ENCODE measurements at regions of chr17 and their contacts with region 1.

Region 1: GRCh38 chr17:68291844-68292695 is 775 bp downstream of the ARSG start:
- DNase-seq: peak; percentile 92
- H3K4me3 Mint-ChIP-seq: peak overlapping the region; percentile 81
- H3K27ac Mint-ChIP-seq: peak overlapping the region; percentile 84
- H3K4me1 Mint-ChIP-seq: peaks cover 60% of the 10 kb centered on the region
- H3K27me3 Mint-ChIP-seq: no peaks in the 10 kb centered on the region

Region 2: DNA sequence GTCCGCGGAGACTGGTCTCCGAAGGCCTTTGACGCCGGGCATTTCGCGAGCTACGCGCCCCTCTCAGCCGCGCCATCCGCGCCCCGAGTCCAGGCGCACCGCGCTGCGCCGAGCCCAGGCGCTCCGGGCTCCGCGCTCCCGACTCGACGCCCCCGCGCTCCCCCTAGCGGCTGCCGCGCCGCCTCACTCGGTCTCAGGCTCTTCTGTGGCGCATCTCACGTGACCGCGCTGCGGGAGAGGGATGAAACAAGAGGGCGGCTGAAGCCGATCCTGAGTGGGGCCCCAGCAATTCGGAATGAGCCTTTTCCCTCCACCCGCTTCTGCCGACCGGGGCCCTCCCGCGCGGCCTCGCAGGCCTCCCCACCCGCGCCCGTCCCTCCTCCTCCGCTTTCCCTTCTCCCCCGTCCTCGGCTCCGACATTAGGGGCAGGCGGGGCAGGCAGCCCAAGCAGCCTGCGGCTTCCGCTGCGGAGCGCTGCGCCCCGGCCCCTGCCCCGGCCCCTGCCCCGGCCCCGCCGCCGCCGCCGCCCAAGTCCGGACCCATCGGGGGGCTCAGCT is 86.7 kb before region 1 on chr17:
- intact Hi-C with region 1: loop called (anchors 2 kb)
- DNase-seq: peak; percentile 90
- H3K4me3 Mint-ChIP-seq: peak overlapping the region; percentile 93
- H3K27ac Mint-ChIP-seq: peak overlapping the region; percentile 33
- H3K4me1 Mint-ChIP-seq: peaks cover 26% of the 10 kb centered on the region
- H3K27me3 Mint-ChIP-seq: peaks cover 9% of the 10 kb centered on the region

Region 3: GRCh38 chr17:68314916-68315535 is 23.0 kb after region 1 on chr17:
- intact Hi-C with region 1: loop called (anchors 2 kb)
- DNase-seq: no peak
- H3K4me3 Mint-ChIP-seq: no peak overlapping the region
- H3K27ac Mint-ChIP-seq: no peak overlapping the region
- H3K4me1 Mint-ChIP-seq: peaks cover 45% of the 10 kb centered on the region
- H3K27me3 Mint-ChIP-seq: no peaks in the 10 kb centered on the region

Region 4: GRCh38 chr17:68356520-68356919 is 64.5 kb after region 1 on chr17:
- intact Hi-C with region 1: loop called (anchors 1 kb)
- DNase-seq: peak; percentile 75
- H3K4me3 Mint-ChIP-seq: peak overlapping the region; percentile 73
- H3K27ac Mint-ChIP-seq: peak overlapping the region; percentile 86
- H3K4me1 Mint-ChIP-seq: peaks cover 57% of the 10 kb centered on the region
- H3K27me3 Mint-ChIP-seq: no peaks in the 10 kb centered on the region

Region 5: GRCh38 chr17:68435876-68436842 is 144.1 kb after region 1 on chr17:
- intact Hi-C with region 1: loop called (anchors 1 kb)
- DNase-seq: peak; percentile 79
- H3K4me3 Mint-ChIP-seq: peak overlapping the region; percentile 30
- H3K27ac Mint-ChIP-seq: peak overlapping the region; percentile 90
- H3K4me1 Mint-ChIP-seq: peaks cover 49% of the 10 kb centered on the region
- H3K27me3 Mint-ChIP-seq: no peaks in the 10 kb centered on the region

Measured in activated T-helper 2 cell treated with anti-CD3 and anti-CD28 coated beads, Interferon-gamma antibody, Interleukin-2, Interleukin-4, amounts not matched to agents 10 μg/mL and 5 μg/mL and 100 μg/mL, durations not matched to agents 14 hours and 24 hours and 36 hours (primary cell).